ENCODE measurements at regions of chr4 and their contacts with region 1.

Region 1: DNA sequence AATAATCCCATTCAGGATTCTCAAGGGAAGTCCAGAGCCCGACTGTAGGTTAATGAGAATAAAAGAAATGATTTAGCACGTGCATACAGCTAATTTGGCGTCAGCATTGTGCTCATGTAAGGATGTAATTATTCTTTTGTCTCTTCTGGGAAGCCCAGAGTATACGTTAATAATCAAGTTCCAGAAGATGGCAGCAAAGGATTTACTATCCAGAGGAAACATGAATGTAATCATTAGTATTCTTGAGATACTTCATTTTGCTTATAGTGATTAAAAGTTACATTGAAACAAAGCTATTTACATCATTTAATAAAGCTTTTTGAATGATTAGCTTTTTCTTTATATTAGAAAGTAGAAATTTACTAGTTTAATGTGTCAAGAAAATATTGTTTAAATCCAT is 27.1 kb upstream of the MAP9 start:
- DNase-seq: peak in 1 of 2 experiments; percentile 62
- H3K4me3 ChIP-seq: no peak overlapping the region
- H3K4me1 ChIP-seq: peaks cover 11% of the 10 kb centered on the region
- H3K27me3 ChIP-seq: peaks cover 1% of the 10 kb centered on the region; the same call in 1 of the 2 replicates

Region 2: GRCh38 chr4:155265113-155265512 is 138.8 kb before region 1 on chr4:
- in situ Hi-C with region 1: no loop called
- DNase-seq: no peak
- H3K4me3 ChIP-seq: no peak overlapping the region
- H3K4me1 ChIP-seq: no peaks in the 10 kb centered on the region
- H3K27me3 ChIP-seq: no peaks in the 10 kb centered on the region

Region 3: GRCh38 chr4:155787113-155787710 is 383.3 kb after region 1 on chr4:
- in situ Hi-C with region 1: loop called (anchors 25 kb)
- DNase-seq: peak; percentile 31 to 62
- H3K4me3 ChIP-seq: no peak overlapping the region
- H3K4me1 ChIP-seq: no peaks in the 10 kb centered on the region
- H3K27me3 ChIP-seq: no peaks in the 10 kb centered on the region

Region 4: DNA sequence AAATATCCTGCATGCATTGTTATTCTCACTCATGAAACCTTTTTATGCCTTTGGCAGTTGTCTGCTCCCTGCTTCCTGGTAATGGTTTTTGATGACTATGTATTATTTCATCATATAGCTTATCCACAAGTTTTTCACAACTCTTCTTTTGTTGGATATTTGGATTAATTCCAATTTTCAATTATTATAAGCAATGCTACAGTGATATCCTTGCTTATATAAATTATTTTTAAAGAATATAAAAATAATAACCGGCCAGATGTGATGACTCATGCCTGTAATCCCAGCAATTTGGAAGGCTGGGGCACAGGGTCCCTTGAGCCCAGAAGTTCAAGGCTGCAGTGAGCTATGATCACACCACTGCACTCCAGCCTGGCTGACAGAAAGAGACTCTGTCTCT is 415.2 kb after region 1 on chr4:
- in situ Hi-C with region 1: no loop called
- DNase-seq: no peak
- H3K4me3 ChIP-seq: no peak overlapping the region
- H3K4me1 ChIP-seq: peaks cover 12% of the 10 kb centered on the region
- H3K27me3 ChIP-seq: no peaks in the 10 kb centered on the region

Region 5: DNA sequence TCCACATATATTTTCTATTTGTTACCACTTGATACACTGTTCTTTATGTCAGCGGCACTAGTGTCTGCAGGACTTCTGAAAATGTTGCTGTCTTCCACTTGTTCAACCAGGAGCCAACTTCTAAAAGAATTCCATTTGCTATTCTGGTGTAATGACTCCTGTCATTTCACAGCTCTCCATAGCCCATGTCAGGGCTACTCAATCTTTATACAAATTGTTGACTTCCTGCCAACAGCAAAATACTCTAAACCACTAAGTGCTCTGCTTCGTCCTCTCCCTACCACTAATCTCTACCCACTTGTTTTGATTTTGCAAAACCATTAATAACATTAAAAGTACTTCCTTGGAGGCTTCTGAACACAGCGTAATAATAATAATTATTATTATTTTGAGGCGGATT is 542.6 kb after region 1 on chr4:
- in situ Hi-C with region 1: loop called (anchors 25 kb)
- DNase-seq: no peak
- H3K4me3 ChIP-seq: no peak overlapping the region
- H3K4me1 ChIP-seq: no peaks in the 10 kb centered on the region; the same call in 1 of the 2 replicates
- H3K27me3 ChIP-seq: no peaks in the 10 kb centered on the region